ENCODE measurements at regions of chr2 and their contacts with region 1.

Region 1: GRCh38 chr2:177332041-177332991 is 60.3 kb upstream of the AGPS start:
- DNase-seq: peak in 4 of 5 donors; percentile 70 to 95 (median 84)
- H3K4me3 ChIP-seq: peak overlapping the region in 1 of 3 donors; percentile 47
- H3K27ac ChIP-seq: peak overlapping the region; percentile 56 to 76
- H3K4me1 ChIP-seq: peaks cover 0 to 4% (median 3%) of the 10 kb centered on the region in 3 donors
- H3K27me3 ChIP-seq: no peaks in the 10 kb centered on the region
- CTCF ChIP-seq: peak; percentile 82

Region 2: GRCh38 chr2:177164584-177165052 is 167.7 kb before region 1 on chr2:
- intact Hi-C with region 1: loop called (anchors 5 kb)
- DNase-seq: peak; percentile 89 to 97 (median 92)
- H3K4me3 ChIP-seq: peak overlapping the region; percentile 51 to 80 (median 66)
- H3K27ac ChIP-seq: peak overlapping the region; percentile 80 to 88
- H3K4me1 ChIP-seq: peaks cover 9 to 20% (median 11%) of the 10 kb centered on the region in 3 donors
- H3K27me3 ChIP-seq: no peaks in the 10 kb centered on the region
- CTCF ChIP-seq: peak; percentile 100

Region 3: GRCh38 chr2:177724398-177725287 is 392.3 kb after region 1 on chr2:
- intact Hi-C with region 1: loop called (anchors 10 kb)
- DNase-seq: peak in 4 of 5 donors; percentile 77 to 93 (median 85)
- H3K4me3 ChIP-seq: peak overlapping the region in 1 of 3 donors; percentile 16
- H3K27ac ChIP-seq: no peak overlapping the region
- H3K4me1 ChIP-seq: peaks cover 3 to 11% (median 4%) of the 10 kb centered on the region in 3 donors
- H3K27me3 ChIP-seq: no peaks in the 10 kb centered on the region
- CTCF ChIP-seq: peak; percentile 88